B cell (primary cell): ENCODE measurements at regions of chr3 and their contacts with region 1.

Region 1: GRCh38 chr3:47836986-47837385 is 34.0 kb downstream of the DHX30 start:
- DNase-seq: no peak
- ATAC-seq: no peak
- H3K4me3 ChIP-seq: no peak overlapping the region
- H3K4me3 Mint-ChIP-seq: no peak overlapping the region
- H3K27ac ChIP-seq: no peak overlapping the region
- H3K27ac Mint-ChIP-seq: peak overlapping the region; percentile 50
- H3K4me1 ChIP-seq: no peaks in the 10 kb centered on the region
- H3K4me1 Mint-ChIP-seq: peaks cover 2% of the 10 kb centered on the region
- H3K27me3 ChIP-seq: no peaks in the 10 kb centered on the region
- H3K27me3 Mint-ChIP-seq: no peaks in the 10 kb centered on the region
- CTCF ChIP-seq: no peak

Region 2: DNA sequence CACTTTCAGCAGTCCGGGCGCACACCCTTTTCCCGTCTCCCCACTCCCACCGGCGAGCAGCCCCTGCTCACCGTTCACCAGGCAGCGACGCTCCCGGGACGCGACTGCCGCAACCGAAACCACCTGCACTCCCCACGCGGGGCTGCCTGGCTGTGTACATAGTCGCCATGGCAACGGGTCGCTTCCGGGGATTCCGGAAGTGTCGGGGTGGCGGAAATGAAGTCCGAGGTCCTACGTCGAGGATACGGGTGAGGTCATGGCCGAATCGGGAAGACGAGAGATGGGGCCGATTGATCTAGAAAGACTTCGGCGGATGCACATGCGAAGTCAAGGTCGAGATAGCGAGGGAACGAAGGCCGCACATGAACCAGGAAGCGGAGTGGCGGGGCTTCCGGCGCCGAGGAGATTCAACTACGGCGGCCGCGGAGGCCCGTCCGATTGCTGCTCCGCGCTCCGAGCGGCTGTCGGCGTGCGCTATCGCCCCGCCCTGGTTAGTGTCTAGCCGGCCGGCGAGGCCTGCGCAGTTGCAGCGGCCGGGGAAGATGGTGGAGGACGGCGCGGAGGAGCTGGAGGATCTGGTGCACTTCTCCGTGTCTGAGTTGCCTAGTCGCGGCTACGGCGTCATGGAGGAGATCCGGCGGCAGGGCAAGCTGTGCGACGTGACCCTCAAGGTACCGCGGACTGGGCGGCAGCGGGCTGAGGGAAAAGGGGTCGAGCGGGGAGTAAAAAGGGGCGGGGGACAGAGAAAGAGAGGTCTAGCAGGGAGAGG is 554.4 kb before region 1 on chr3 and contains the starts of genes KIF9 and KLHL18:
- CTCF ChIA-PET with region 1: no interaction called
- POLR2A ChIA-PET with region 1: no interaction called
- intact Hi-C with region 1: no loop called
- DNase-seq: peak; percentile 100
- ATAC-seq: peak; percentile 85
- H3K4me3 ChIP-seq: peak within 1 kb of the TSS; percentile 74 to 98 (median 89)
- H3K4me3 Mint-ChIP-seq: peak within 1 kb of the TSS; percentile 99
- H3K27ac ChIP-seq: peak within 1 kb of the TSS; percentile 99
- H3K27ac Mint-ChIP-seq: peak within 1 kb of the TSS; percentile 100
- H3K4me1 ChIP-seq: peaks cover 33 to 49% of the 10 kb centered on the region in 2 donors
- H3K4me1 Mint-ChIP-seq: peaks cover 45% of the 10 kb centered on the region
- H3K27me3 ChIP-seq: no peaks in the 10 kb centered on the region
- H3K27me3 Mint-ChIP-seq: no peaks in the 10 kb centered on the region
- CTCF ChIP-seq: no peak
- total RNA-seq, gene KIF9: 1.3 and 3.0 TPM in 2 replicates
- total RNA-seq, gene KLHL18: 30.9 and 33.0 TPM in 2 replicates

Region 3: GRCh38 chr3:47315069-47315647 is 521.8 kb before region 1 on chr3:
- CTCF ChIA-PET with region 1: no interaction called
- POLR2A ChIA-PET with region 1: no interaction called
- intact Hi-C with region 1: no loop called
- DNase-seq: no peak
- ATAC-seq: no peak
- H3K4me3 ChIP-seq: no peak overlapping the region
- H3K4me3 Mint-ChIP-seq: no peak overlapping the region
- H3K27ac ChIP-seq: no peak overlapping the region
- H3K27ac Mint-ChIP-seq: no peak overlapping the region
- H3K4me1 ChIP-seq: peaks cover 0 to 3% of the 10 kb centered on the region in 2 donors
- H3K4me1 Mint-ChIP-seq: peaks cover 20% of the 10 kb centered on the region
- H3K27me3 ChIP-seq: no peaks in the 10 kb centered on the region
- H3K27me3 Mint-ChIP-seq: no peaks in the 10 kb centered on the region
- CTCF ChIP-seq: no peak

Region 4: DNA sequence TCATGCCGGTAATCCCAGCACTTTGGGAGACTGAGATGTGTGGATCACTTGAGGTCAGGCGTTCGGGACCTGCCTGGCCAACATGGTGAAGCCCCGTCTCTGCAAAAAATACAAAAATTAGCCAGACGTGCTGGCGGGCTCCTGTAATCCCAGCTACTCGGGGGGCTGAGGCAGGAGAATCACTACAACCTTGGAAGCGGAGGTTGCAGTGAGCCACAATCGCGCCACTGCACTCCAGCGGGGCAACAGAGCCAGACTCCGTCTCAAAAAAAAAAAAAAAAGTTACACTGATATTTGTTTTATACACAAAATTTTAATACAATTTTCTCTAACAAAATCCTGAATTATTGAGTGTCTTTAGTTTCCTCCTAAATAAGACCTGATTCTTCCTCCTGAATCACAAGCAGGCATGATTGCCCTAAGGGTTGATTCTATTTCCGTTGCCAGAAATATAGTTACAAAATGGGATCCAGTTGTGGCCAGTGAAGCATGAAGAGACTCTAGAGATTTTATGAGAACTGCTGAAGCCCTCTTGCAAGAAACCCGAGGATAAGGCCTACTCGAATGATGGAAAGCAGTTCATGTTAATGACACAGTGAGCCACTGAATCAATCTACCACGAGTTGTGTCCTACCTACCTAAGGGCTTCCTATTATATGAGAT is 45.7 kb before region 1 on chr3:
- CTCF ChIA-PET with region 1: no interaction called
- POLR2A ChIA-PET with region 1: no interaction called
- intact Hi-C with region 1: no loop called
- DNase-seq: no peak
- ATAC-seq: no peak
- H3K4me3 ChIP-seq: no peak overlapping the region
- H3K4me3 Mint-ChIP-seq: no peak overlapping the region
- H3K27ac ChIP-seq: no peak overlapping the region
- H3K27ac Mint-ChIP-seq: peak overlapping the region; percentile 4
- H3K4me1 ChIP-seq: no peaks in the 10 kb centered on the region
- H3K4me1 Mint-ChIP-seq: peaks cover 1% of the 10 kb centered on the region
- H3K27me3 ChIP-seq: no peaks in the 10 kb centered on the region
- H3K27me3 Mint-ChIP-seq: no peaks in the 10 kb centered on the region
- CTCF ChIP-seq: no peak

Region 5: DNA sequence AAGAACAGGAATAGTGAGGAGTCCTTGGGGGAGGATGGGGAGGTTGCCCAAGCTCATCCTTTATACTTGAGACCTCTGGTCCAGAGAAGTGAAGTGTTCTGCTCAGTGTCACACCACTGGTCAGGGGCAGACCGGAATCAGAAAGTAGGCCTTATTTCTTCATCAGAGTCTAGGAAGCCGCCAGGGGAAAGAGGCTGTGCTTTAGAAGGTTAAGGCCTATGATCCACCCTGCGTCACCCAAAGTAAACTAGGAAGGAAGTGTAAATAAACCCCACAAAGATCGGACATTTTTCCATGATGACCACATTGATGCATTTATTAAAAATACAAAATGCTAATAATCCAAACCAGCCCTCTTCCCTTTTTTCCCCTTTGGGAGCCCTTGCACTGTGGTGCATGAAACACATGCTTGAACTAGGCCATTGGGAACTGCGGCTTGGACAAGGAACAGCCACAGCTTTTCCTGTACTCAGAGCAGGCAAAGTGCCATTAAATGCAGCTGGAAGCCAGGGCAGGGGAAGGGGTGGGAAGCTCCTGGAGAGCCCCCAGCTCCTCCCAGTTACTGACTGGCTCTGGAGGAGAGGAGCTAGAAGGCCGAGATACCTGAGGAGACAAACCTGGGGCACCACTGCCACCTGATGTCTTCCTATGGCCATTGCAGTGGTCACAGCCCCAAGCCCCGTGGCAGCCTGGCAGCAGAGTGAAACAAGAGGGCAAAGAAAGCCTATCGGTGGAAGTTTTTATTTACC is 314.2 kb after region 1 on chr3:
- CTCF ChIA-PET with region 1: interaction called, 30 read pairs
- POLR2A ChIA-PET with region 1: no interaction called
- intact Hi-C with region 1: no loop called
- DNase-seq: peak; percentile 67
- ATAC-seq: peak; percentile 81
- H3K4me3 ChIP-seq: no peak overlapping the region
- H3K4me3 Mint-ChIP-seq: no peak overlapping the region
- H3K27ac ChIP-seq: no peak overlapping the region
- H3K27ac Mint-ChIP-seq: no peak overlapping the region
- H3K4me1 ChIP-seq: no peaks in the 10 kb centered on the region
- H3K4me1 Mint-ChIP-seq: no peaks in the 10 kb centered on the region
- H3K27me3 ChIP-seq: no peaks in the 10 kb centered on the region
- H3K27me3 Mint-ChIP-seq: no peaks in the 10 kb centered on the region
- CTCF ChIP-seq: peak; percentile 70